Activated CD4-positive, alpha-beta memory T cell treated with anti-CD3 and anti-CD28 coated beads, Interleukin-2, amount 10 ng/mL, durations not matched to agents 7 days and 5 days (primary cell): ENCODE measurements at regions of chr1 and their contacts with region 1.

Region 1: GRCh38 chr1:89274411-89274857 is 1.8 kb upstream of the GBP5 start:
- DNase-seq: no peak
- H3K4me3 Mint-ChIP-seq: peak overlapping the region; percentile 77
- H3K27ac Mint-ChIP-seq: peak overlapping the region; percentile 97
- H3K4me1 Mint-ChIP-seq: peaks cover 71% of the 10 kb centered on the region
- H3K27me3 Mint-ChIP-seq: no peaks in the 10 kb centered on the region

Region 2: DNA sequence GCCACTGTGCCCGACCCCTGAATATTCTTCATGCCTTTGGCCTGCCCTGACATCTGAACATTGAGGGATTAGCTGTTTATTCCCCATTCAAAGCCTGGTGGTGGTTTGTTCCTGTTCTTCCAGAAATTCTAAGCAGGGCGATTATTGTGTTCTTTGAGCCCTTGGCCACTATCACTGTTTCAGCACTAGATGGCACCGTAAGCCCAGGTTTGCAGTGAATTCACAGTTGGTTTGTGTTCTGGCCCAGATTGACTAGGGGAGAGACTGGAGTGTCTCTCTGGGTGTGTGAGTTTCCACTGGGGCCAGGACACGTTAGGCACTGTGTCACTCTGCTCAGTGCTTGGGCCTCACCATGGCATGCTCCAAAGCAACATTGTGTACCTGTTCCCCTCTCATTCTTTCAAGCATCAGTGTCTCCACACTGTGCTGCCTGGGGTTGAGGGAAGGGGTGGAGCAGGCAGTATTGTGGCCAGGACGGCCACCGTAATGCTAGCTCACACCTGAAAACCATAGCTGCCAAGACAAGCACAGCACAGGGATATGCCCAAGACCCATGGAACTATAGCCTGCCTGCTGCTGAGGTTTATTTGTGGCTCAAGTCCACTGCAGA is 537.7 kb before region 1 on chr1:
- CTCF ChIA-PET with region 1: no interaction called
- POLR2A ChIA-PET with region 1: no interaction called
- DNase-seq: peak; percentile 49
- H3K4me3 Mint-ChIP-seq: no peak overlapping the region
- H3K27ac Mint-ChIP-seq: no peak overlapping the region
- H3K4me1 Mint-ChIP-seq: peaks cover 7% of the 10 kb centered on the region
- H3K27me3 Mint-ChIP-seq: no peaks in the 10 kb centered on the region

Region 3: GRCh38 chr1:89022167-89022959 is 252.1 kb before region 1 on chr1 and contains the start of gene GBP3:
- CTCF ChIA-PET with region 1: interaction called, 7 read pairs
- POLR2A ChIA-PET with region 1: interaction called, 26 read pairs
- DNase-seq: no peak
- H3K4me3 Mint-ChIP-seq: peak within 1 kb of the TSS; percentile 87
- H3K27ac Mint-ChIP-seq: peak within 1 kb of the TSS; percentile 84
- H3K4me1 Mint-ChIP-seq: peaks cover 40% of the 10 kb centered on the region
- H3K27me3 Mint-ChIP-seq: no peaks in the 10 kb centered on the region
- total RNA-seq, gene GBP3: 33.6 to 34.4 TPM

Region 4: GRCh38 chr1:89104147-89104546 is 170.3 kb before region 1 on chr1:
- CTCF ChIA-PET with region 1: no interaction called
- POLR2A ChIA-PET with region 1: no interaction called
- DNase-seq: no peak
- H3K4me3 Mint-ChIP-seq: no peak overlapping the region
- H3K27ac Mint-ChIP-seq: no peak overlapping the region
- H3K4me1 Mint-ChIP-seq: peaks cover 2% of the 10 kb centered on the region
- H3K27me3 Mint-ChIP-seq: no peaks in the 10 kb centered on the region

Region 5: GRCh38 chr1:89125913-89126580 is 148.4 kb before region 1 on chr1 and contains the start of gene GBP2:
- CTCF ChIA-PET with region 1: interaction called, 22 read pairs
- POLR2A ChIA-PET with region 1: interaction called, 17 read pairs
- DNase-seq: peak; percentile 32
- H3K4me3 Mint-ChIP-seq: peak within 1 kb of the TSS; percentile 99
- H3K27ac Mint-ChIP-seq: peak within 1 kb of the TSS; percentile 97
- H3K4me1 Mint-ChIP-seq: peaks cover 55% of the 10 kb centered on the region
- H3K27me3 Mint-ChIP-seq: no peaks in the 10 kb centered on the region
- total RNA-seq, gene GBP2: 280 to 281 TPM

Region 6: GRCh38 chr1:89261926-89262515 is 12.4 kb before region 1 on chr1:
- CTCF ChIA-PET with region 1: interaction called, 4 read pairs
- POLR2A ChIA-PET with region 1: interaction called, 86 read pairs
- DNase-seq: no peak
- H3K4me3 Mint-ChIP-seq: peak overlapping the region; percentile 34
- H3K27ac Mint-ChIP-seq: peak overlapping the region; percentile 84
- H3K4me1 Mint-ChIP-seq: peaks cover 75% of the 10 kb centered on the region
- H3K27me3 Mint-ChIP-seq: no peaks in the 10 kb centered on the region

Region 7: GRCh38 chr1:89298461-89298860 is 24.0 kb after region 1 on chr1:
- CTCF ChIA-PET with region 1: interaction called, 4 read pairs
- POLR2A ChIA-PET with region 1: interaction called, 35 read pairs
- DNase-seq: no peak
- H3K4me3 Mint-ChIP-seq: no peak overlapping the region
- H3K27ac Mint-ChIP-seq: no peak overlapping the region
- H3K4me1 Mint-ChIP-seq: peaks cover 59% of the 10 kb centered on the region
- H3K27me3 Mint-ChIP-seq: peaks cover 4% of the 10 kb centered on the region

Region 8: DNA sequence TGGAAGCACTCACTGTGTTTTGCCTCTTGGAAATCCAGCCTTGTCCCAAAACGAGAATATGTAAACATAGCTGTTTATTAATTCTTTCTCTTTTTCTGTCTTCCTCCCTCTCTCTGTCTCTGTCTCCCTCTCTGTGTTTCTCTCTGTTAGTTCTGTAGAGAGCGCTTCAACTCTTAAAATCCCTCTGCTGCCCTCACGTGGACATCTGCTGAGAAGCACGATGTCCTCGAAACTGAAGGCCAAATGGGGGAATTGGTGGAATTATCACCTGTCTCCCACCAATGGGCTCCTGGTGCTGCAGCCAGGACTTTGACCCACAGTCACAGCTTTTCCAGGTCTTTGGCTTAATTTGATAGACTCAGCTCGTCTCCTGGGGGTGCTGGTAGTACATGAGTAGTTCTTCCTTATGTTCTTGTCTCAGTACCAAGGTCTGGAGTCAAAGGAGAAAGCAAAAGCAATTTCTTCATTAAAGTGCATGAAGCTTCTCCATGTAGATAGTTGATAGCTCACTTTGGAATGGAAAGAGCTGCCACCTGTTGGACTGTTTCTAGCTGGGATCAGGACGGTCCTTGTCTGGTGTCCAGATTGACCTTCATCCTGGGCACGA is 84.0 kb after region 1 on chr1:
- CTCF ChIA-PET with region 1: interaction called, 51 read pairs
- POLR2A ChIA-PET with region 1: interaction called, 16 read pairs
- DNase-seq: peak; percentile 86
- H3K4me3 Mint-ChIP-seq: peak overlapping the region; percentile 29
- H3K27ac Mint-ChIP-seq: no peak overlapping the region
- H3K4me1 Mint-ChIP-seq: peaks cover 47% of the 10 kb centered on the region
- H3K27me3 Mint-ChIP-seq: no peaks in the 10 kb centered on the region